ENCODE measurements at regions of chr15 and their contacts with region 1.

Region 1: GRCh38 chr15:78695854-78696253 is 54.8 kb upstream of the CHRNB4 start:
- DNase-seq: no peak
- ATAC-seq: peak; percentile 80
- H3K4me3 Mint-ChIP-seq: no peak overlapping the region
- H3K27ac Mint-ChIP-seq: no peak overlapping the region
- H3K4me1 Mint-ChIP-seq: peaks cover 29% of the 10 kb centered on the region
- H3K27me3 Mint-ChIP-seq: no peaks in the 10 kb centered on the region; the same call in 1 of the 2 replicates
- CTCF ChIP-seq: no peak

Region 2: DNA sequence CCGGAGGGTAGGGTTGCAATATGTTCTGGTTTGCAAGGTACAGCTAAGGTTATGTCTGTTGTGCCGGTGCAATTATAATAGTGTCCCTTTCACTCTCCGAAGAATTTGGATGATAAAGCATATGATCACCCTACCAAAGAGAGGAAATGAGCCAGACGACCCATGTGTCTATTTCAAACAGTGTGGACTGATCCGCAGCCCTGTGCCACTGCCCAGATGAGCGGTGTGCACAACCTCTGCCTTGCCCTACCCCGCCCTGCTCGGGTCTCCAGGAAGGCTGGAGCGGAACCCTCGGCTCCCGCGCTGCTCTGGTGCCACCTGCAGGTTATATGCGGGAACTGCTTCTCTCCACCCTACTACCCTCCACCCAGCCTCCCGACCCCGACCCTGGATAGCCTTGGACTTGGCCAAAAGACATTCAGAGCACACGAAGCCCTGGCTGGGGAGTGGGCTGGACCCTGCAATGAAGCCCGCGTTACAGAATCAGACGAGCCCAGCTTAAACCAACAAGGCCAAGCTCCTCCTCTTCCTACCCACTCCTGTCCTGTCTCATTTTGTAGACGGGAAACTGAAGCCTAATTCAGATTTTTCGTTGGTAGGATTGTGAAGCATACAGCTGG is 13.5 kb after region 1 on chr15:
- CTCF ChIA-PET with region 1: interaction called, 12 read pairs
- POLR2A ChIA-PET with region 1: no interaction called
- DNase-seq: peak; percentile 90
- ATAC-seq: peak; percentile 100
- H3K4me3 Mint-ChIP-seq: no peak overlapping the region
- H3K27ac Mint-ChIP-seq: no peak overlapping the region
- H3K4me1 Mint-ChIP-seq: peaks cover 9% of the 10 kb centered on the region
- H3K27me3 Mint-ChIP-seq: peaks cover 19% of the 10 kb centered on the region
- CTCF ChIP-seq: peak; percentile 91

Region 3: GRCh38 chr15:78757636-78757905 is 61.7 kb after region 1 on chr15:
- CTCF ChIA-PET with region 1: no interaction called
- POLR2A ChIA-PET with region 1: no interaction called
- DNase-seq: no peak
- ATAC-seq: no peak
- H3K4me3 Mint-ChIP-seq: no peak overlapping the region
- H3K27ac Mint-ChIP-seq: no peak overlapping the region
- H3K4me1 Mint-ChIP-seq: peaks cover 2% of the 10 kb centered on the region; the same call in 1 of the 2 replicates
- H3K27me3 Mint-ChIP-seq: no peaks in the 10 kb centered on the region
- CTCF ChIP-seq: no peak

Region 4: DNA sequence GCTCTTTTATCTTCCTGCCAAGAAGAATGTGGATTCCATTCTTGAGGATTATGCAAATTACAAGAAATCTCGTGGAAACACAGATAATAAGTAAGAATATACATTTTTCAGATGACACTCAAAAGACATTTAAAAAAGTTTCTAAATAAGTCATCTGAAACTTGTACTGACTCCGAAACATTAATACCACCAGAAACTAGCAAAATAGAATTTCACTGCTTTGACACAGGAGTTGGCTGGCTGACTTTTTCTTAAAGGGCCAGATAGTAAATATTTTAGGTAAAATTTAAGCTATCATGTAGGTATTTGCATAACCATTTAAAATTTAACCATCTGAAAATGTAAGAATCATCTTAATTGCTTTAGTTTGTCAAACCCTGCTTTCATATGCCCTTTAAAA is 197.7 kb after region 1 on chr15:
- CTCF ChIA-PET with region 1: no interaction called
- POLR2A ChIA-PET with region 1: no interaction called
- DNase-seq: no peak
- ATAC-seq: no peak
- H3K4me3 Mint-ChIP-seq: no peak overlapping the region
- H3K27ac Mint-ChIP-seq: no peak overlapping the region
- H3K4me1 Mint-ChIP-seq: peaks cover 4% of the 10 kb centered on the region
- H3K27me3 Mint-ChIP-seq: no peaks in the 10 kb centered on the region
- CTCF ChIP-seq: no peak

Measured in WTC11 (cell line).